Motor neuron (in vitro differentiated cells): ENCODE measurements at regions of chr4 and their contacts with region 1.

Region 1: DNA sequence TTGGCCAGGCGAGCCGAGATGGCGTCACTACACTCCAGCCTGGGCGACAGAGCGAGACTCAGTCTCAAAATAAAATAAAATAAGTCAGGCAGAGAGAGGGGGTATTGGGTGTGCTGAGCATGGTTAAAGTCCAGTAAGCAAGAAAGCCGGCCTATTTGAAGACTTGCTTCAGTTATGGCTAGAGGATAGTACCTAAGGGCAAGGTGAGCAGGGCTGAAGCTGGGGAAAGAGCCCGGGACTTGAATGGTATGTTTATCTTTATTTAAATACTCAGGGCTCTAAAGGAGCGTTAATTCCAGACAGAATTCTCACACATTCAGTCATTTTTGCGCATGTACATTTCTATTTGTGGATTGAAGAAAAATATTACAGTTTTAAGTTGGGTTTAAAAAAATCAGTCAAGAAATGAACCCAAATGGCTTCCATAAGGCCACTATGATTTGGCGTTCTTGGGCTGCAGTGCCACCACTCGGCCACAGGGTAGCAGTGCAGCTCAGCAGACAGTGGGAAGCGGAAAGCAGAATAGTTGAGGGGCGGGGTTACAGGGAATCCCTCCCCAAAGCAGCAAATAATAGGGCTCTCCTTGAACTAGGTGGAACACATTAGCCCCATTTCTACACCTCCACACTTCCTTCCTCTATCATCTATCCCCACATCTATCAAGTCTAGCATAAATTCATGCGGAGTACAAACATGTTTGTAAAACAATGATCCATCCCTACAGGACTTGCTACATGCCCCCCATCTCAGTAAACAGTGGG is 37.2 kb upstream of the SH3D19 start:
- ATAC-seq: peak; percentile 70 to 99 (median 85)
- H3K4me3 ChIP-seq: no peak overlapping the region
- H3K27ac ChIP-seq: no peak overlapping the region
- H3K4me1 ChIP-seq: no peaks in the 10 kb centered on the region

Region 2: DNA sequence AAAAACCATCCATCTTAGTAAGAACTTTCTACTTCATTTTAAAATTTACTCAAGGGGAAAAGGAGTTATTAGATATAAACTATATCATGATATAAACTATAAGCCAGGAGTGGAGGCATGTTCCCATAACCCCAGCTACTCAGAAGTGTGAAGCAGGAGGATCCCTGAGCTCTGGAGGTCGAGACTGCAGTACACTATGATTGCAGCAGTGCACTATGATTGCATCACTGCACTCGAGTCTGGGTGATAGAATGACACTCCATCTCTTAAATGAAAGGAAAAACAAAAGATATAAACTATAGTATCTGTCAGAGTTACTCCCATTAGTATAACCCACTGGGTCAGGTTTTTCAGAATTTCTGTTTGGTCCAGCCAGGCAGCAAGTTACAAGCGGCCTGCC is 215.6 kb before region 1 on chr4:
- in situ Hi-C with region 1: loop called in 2 of 9 experiments (anchors 25 kb)
- ATAC-seq: peak in 3 of 8 experiments; percentile 50 to 85 (median 55)
- H3K4me3 ChIP-seq: no peak overlapping the region
- H3K27ac ChIP-seq: no peak overlapping the region
- H3K4me1 ChIP-seq: no peaks in the 10 kb centered on the region